ENCODE measurements at regions of chr17 and their contacts with region 1.

Region 1: DNA sequence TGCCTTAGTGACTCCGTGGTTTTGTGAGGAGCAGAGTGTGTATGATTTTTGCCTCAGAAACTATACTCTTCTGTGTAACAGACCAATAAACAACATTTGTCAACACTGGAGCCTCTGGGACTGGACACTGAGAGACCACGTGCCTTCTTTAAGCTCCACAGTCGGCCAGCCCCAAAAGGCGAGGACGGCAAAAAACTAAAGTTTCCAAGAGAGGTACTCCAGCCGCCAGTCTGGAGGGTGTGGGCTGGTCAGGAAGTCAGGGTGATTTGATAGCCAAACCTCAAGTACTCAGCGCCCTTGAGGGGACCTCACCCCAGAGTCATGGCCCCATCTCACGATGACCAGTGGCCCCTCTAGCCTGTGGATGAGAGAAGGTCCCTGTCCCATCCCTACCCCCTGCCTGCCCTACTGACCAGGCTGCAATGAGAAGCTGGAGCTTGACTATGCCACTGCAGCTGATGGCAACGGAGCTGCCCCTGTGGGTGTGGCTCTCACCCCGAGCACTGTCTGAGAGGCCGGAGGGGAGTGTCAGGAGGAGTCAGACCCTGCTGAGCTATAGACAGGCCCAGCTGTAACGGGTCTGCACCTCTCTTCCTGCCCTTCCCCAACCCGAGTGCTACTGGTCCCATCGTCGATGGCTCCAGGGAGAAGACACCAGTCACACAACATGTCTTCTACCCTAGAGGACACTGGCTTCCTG is 19.8 kb downstream of the MNT start:
- DNase-seq: no peak
- H3K4me3 ChIP-seq: no peak overlapping the region
- H3K27ac ChIP-seq: no peak overlapping the region
- H3K4me1 ChIP-seq: peaks cover 0 to 19% (median 3%) of the 10 kb centered on the region in 4 donors
- H3K27me3 ChIP-seq: no peaks in the 10 kb centered on the region
- CTCF ChIP-seq: no peak

Region 2: DNA sequence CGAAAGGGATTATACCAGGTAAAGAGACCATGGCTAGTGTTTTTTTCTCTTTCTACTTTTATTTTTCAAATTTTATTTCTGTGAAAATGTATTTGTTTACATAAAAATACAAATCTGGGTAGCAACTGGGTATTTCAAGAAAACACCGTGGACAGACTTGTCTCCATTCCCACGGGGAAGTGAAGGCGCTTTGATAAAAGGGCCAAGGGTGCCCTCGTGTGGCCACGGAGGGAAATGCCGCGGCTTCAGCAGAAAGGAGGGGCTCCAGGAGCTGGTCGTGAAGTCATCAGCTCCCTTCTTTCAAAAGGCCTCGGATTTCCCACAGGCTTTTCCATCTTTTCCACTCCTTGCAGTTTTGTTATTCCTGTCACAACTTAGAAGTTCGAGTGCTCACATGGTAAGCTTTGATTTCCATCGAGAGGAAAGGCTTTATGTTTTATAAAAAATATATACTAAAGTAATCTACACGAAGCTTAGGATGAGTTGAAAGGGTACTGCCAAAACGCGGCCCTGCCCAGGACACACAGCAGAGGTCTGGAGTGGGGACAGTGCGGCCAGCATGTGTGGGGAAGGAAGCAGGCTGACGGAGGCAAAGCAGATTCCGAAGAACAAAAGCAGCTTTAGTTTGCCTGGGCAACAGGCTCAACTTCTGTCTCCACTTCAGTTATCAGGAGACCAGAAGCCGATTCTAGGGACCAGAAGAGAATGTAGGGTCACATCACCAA is 35.1 kb after region 1 on chr17:
- intact Hi-C with region 1: loop called (anchors 1 kb)
- DNase-seq: peak; percentile 92 to 95
- H3K4me3 ChIP-seq: no peak overlapping the region
- H3K27ac ChIP-seq: peak overlapping the region in 1 of 2 donors; percentile 33
- H3K4me1 ChIP-seq: peaks cover 0 to 34% (median 13%) of the 10 kb centered on the region in 4 donors
- H3K27me3 ChIP-seq: no peaks in the 10 kb centered on the region
- CTCF ChIP-seq: peak; percentile 95 to 97

Region 3: GRCh38 chr17:2435181-2435741 is 54.2 kb after region 1 on chr17:
- intact Hi-C with region 1: no loop called
- DNase-seq: no peak
- H3K4me3 ChIP-seq: no peak overlapping the region
- H3K27ac ChIP-seq: no peak overlapping the region
- H3K4me1 ChIP-seq: no peaks in the 10 kb centered on the region
- H3K27me3 ChIP-seq: no peaks in the 10 kb centered on the region
- CTCF ChIP-seq: no peak